CD4-positive, alpha-beta T cell (primary cell): ENCODE measurements at regions of chr5 and their contacts with region 1.

Region 1: GRCh38 chr5:148290271-148291195 is 21.7 kb upstream of the SPINK7 start:
- DNase-seq: peak in 2 of 14 experiments; percentile 13 to 20
- ATAC-seq: no peak
- H3K4me3 ChIP-seq: no peak overlapping the region
- H3K4me3 Mint-ChIP-seq: no peak overlapping the region
- H3K27ac ChIP-seq: no peak overlapping the region
- H3K27ac Mint-ChIP-seq: no peak overlapping the region
- H3K4me1 ChIP-seq: no peaks in the 10 kb centered on the region
- H3K4me1 Mint-ChIP-seq: no peaks in the 10 kb centered on the region
- H3K27me3 ChIP-seq: no peaks in the 10 kb centered on the region
- H3K27me3 Mint-ChIP-seq: no peaks in the 10 kb centered on the region
- CTCF ChIP-seq: peak; percentile 8

Region 2: GRCh38 chr5:146962801-146963355 is 1327.7 kb before region 1 on chr5:
- CTCF ChIA-PET with region 1: no interaction called
- POLR2A ChIA-PET with region 1: no interaction called
- intact Hi-C with region 1: no loop called
- DNase-seq: no peak
- ATAC-seq: no peak
- H3K4me3 ChIP-seq: no peak overlapping the region
- H3K4me3 Mint-ChIP-seq: no peak overlapping the region
- H3K27ac ChIP-seq: no peak overlapping the region
- H3K27ac Mint-ChIP-seq: no peak overlapping the region
- H3K4me1 ChIP-seq: no peaks in the 10 kb centered on the region
- H3K4me1 Mint-ChIP-seq: no peaks in the 10 kb centered on the region
- H3K27me3 ChIP-seq: peaks cover 0 to 6% of the 10 kb centered on the region in 2 experiments
- H3K27me3 Mint-ChIP-seq: no peaks in the 10 kb centered on the region
- CTCF ChIP-seq: no peak

Region 3: GRCh38 chr5:147887024-147887627 is 403.4 kb before region 1 on chr5:
- CTCF ChIA-PET with region 1: no interaction called
- POLR2A ChIA-PET with region 1: no interaction called
- intact Hi-C with region 1: no loop called
- DNase-seq: peak in 1 of 14 experiments; percentile 11
- ATAC-seq: no peak
- H3K4me3 ChIP-seq: no peak overlapping the region
- H3K4me3 Mint-ChIP-seq: no peak overlapping the region
- H3K27ac ChIP-seq: no peak overlapping the region
- H3K27ac Mint-ChIP-seq: no peak overlapping the region
- H3K4me1 ChIP-seq: no peaks in the 10 kb centered on the region
- H3K4me1 Mint-ChIP-seq: no peaks in the 10 kb centered on the region
- H3K27me3 ChIP-seq: peaks cover 0 to 5% of the 10 kb centered on the region in 2 experiments
- H3K27me3 Mint-ChIP-seq: peaks cover 19% of the 10 kb centered on the region
- CTCF ChIP-seq: no peak

Region 4: DNA sequence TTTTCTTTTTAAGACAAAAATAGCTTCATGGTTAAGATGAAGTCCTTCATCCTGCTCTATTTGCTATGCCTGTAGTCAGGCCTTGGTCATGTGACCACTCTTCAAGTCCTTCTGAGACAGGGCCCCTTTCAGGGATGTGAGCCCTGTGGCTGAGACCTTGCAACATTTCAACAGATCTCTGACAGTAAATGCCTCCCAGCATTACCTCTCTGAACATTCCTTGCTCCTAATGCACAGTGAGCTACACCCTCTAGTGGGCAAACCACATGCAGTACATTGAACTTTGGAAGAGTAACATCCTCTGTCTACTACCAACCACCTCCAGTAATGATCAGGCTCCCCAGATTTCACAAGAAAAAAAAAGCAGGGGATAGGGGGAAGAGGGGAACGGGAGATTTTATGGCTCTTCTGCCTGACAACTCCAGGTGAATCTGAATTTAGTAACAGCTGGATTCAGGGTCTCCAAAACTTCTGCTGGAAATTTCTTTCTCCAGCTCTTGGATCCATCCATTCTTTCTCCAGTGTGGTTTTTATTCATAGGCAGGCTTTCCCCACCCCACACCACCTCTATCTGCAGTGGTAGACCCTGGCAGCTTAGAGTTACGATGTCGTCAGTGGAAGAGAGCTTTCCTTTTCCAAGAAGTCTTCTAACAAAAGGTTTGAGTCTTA is 84.3 kb after region 1 on chr5:
- CTCF ChIA-PET with region 1: interaction called, 5 read pairs
- POLR2A ChIA-PET with region 1: no interaction called
- intact Hi-C with region 1: loop called (anchors 1 to 2 kb)
- DNase-seq: peak in 6 of 14 experiments; percentile 1 to 52 (median 28)
- ATAC-seq: peak; percentile 62
- H3K4me3 ChIP-seq: no peak overlapping the region
- H3K4me3 Mint-ChIP-seq: no peak overlapping the region
- H3K27ac ChIP-seq: no peak overlapping the region
- H3K27ac Mint-ChIP-seq: no peak overlapping the region
- H3K4me1 ChIP-seq: no peaks in the 10 kb centered on the region
- H3K4me1 Mint-ChIP-seq: peaks cover 7% of the 10 kb centered on the region
- H3K27me3 ChIP-seq: no peaks in the 10 kb centered on the region
- H3K27me3 Mint-ChIP-seq: no peaks in the 10 kb centered on the region
- CTCF ChIP-seq: peak; percentile 52